Posterior vena cava (tissue), 2 donors: ENCODE measurements at regions of chr15 and their contacts with region 1.

Region 1: GRCh38 chr15:52440400-52440799 is 88.3 kb downstream of the MYO5A start:
- DNase-seq: no peak

Region 2: DNA sequence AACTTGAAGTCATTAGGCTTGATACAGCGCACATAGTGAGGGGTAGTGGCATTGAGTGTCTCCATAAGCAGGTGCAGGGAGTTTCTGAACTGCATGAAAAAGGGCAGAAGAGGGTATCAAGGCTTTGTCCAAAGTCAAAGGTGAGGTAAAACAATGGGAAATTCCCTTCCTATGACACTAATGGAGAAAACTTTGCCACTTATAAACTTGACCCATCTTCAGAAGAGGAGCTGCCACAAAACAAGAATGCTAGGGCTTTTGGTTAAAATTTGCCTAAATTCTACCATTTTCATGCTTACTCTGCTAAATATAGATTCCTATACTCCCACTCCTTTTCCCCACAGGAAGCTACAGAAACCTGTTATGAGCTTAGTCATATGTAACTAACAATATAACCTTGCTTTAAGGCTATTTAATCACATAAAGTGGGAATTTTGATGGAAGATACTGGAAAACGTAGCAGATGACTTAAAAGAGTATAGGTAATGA is 57.3 kb before region 1 on chr15:
- intact Hi-C with region 1: loop called in 1 of 2 experiments (anchors 2 kb)
- DNase-seq: no peak